ENCODE measurements at regions of chr19 and their contacts with region 1.

Region 1: GRCh38 chr19:11798391-11799330 is at the start of gene ZNF491:
- DNase-seq: peak; percentile 88 to 96 (median 94)
- H3K4me3 ChIP-seq: peak within 1 kb of the TSS; percentile 44 to 93 (median 82)
- H3K27ac ChIP-seq: peak within 1 kb of the TSS in 58 of 59 donors; percentile 1 to 91 (median 76)
- H3K27me3 ChIP-seq: no peaks in the 10 kb centered on the region
- CTCF ChIP-seq: peak in 35 of 56 donors; percentile 4 to 50 (median 24)
- total RNA-seq, gene ZNF491: 3.3 to 10.8 (median 6.0) TPM

Region 2: GRCh38 chr19:11813703-11814028 is 15.0 kb after region 1 on chr19:
- intact Hi-C with region 1: loop called in 1 of 2 experiments (anchors 2 kb)
- DNase-seq: peak in 4 of 10 donors; percentile 9 to 48 (median 37)
- H3K4me3 ChIP-seq: peak overlapping the region; percentile 65 to 98 (median 92)
- H3K27ac ChIP-seq: peak overlapping the region in 47 of 59 donors; percentile 15 to 94 (median 88)
- H3K27me3 ChIP-seq: no peaks in the 10 kb centered on the region
- CTCF ChIP-seq: no peak

Region 3: GRCh38 chr19:11924886-11925650 is 126.4 kb after region 1 on chr19 and contains the start of gene ZNF700:
- intact Hi-C with region 1: loop called (anchors 2 to 5 kb)
- DNase-seq: peak; percentile 90 to 97 (median 96)
- H3K4me3 ChIP-seq: peak within 1 kb of the TSS; percentile 59 to 100 (median 94)
- H3K27ac ChIP-seq: peak within 1 kb of the TSS; percentile 65 to 97 (median 88)
- H3K27me3 ChIP-seq: no peaks in the 10 kb centered on the region
- CTCF ChIP-seq: peak in 17 of 56 donors; percentile 7 to 55 (median 24)
- total RNA-seq, gene ZNF700: 8.4 to 16.2 (median 11.6) TPM

Region 4: GRCh38 chr19:11987405-11988281 is 189.0 kb after region 1 on chr19:
- intact Hi-C with region 1: loop called (anchors 1 to 2 kb)
- DNase-seq: peak; percentile 85 to 96 (median 95)
- H3K4me3 ChIP-seq: peak overlapping the region; percentile 52 to 90 (median 78)
- H3K27ac ChIP-seq: peak overlapping the region in 50 of 59 donors; percentile 3 to 87 (median 62)
- H3K27me3 ChIP-seq: no peaks in the 10 kb centered on the region
- CTCF ChIP-seq: peak in 43 of 56 donors; percentile 3 to 66 (median 39)

Region 5: GRCh38 chr19:12064590-12065538 is 266.2 kb after region 1 on chr19 and contains the start of gene ZNF844:
- intact Hi-C with region 1: loop called in 1 of 2 experiments (anchors 5 kb)
- DNase-seq: peak; percentile 97 to 99 (median 98)
- H3K4me3 ChIP-seq: peak within 1 kb of the TSS; percentile 56 to 95 (median 80)
- H3K27ac ChIP-seq: peak within 1 kb of the TSS; percentile 58 to 97 (median 90)
- H3K27me3 ChIP-seq: no peaks in the 10 kb centered on the region
- CTCF ChIP-seq: peak in 16 of 56 donors; percentile 6 to 42 (median 26)
- total RNA-seq, gene ZNF844: 7.1 to 44.3 (median 13.7) TPM

Measured in dorsolateral prefrontal cortex (tissue), 120 donors.